Activated naive CD4-positive, alpha-beta T cell treated with anti-CD3 and anti-CD28 coated beads for 36 hours (primary cell): ENCODE measurements at regions of chr10 and their contacts with region 1.

Region 1: GRCh38 chr10:62224606-62225005 is 44.0 kb downstream of the RTKN2 start:
- DNase-seq: no peak
- H3K4me3 Mint-ChIP-seq: no peak overlapping the region
- H3K27ac Mint-ChIP-seq: peak overlapping the region; percentile 86
- H3K4me1 Mint-ChIP-seq: peaks cover 10% of the 10 kb centered on the region
- H3K27me3 Mint-ChIP-seq: no peaks in the 10 kb centered on the region

Region 2: GRCh38 chr10:62106929-62107532 is 117.6 kb before region 1 on chr10:
- CTCF ChIA-PET with region 1: no interaction called
- intact Hi-C with region 1: no loop called
- DNase-seq: no peak
- H3K4me3 Mint-ChIP-seq: no peak overlapping the region
- H3K27ac Mint-ChIP-seq: no peak overlapping the region
- H3K4me1 Mint-ChIP-seq: peaks cover 35% of the 10 kb centered on the region
- H3K27me3 Mint-ChIP-seq: no peaks in the 10 kb centered on the region

Region 3: DNA sequence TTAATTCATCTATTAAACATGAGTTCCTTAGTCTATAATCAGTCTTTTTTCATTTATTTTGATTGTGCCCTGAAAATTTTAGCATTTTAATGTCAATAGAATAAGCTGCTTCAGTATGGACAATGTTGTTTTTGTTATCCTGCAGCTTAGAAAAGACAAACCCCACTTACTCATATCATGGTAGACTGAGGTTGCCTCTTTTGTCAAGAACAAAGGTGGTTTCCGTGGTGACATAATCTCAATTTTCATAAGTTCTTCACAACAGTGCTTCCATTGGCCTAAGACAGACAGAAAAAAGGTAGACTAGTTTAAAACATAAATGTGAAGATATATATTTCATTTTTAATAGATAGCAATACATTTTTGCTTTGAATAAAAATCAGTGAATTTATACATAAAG is 25.0 kb before region 1 on chr10:
- CTCF ChIA-PET with region 1: no interaction called
- intact Hi-C with region 1: loop called (anchors 1 kb)
- DNase-seq: no peak
- H3K4me3 Mint-ChIP-seq: no peak overlapping the region
- H3K27ac Mint-ChIP-seq: peak overlapping the region; percentile 5
- H3K4me1 Mint-ChIP-seq: peaks cover 31% of the 10 kb centered on the region
- H3K27me3 Mint-ChIP-seq: no peaks in the 10 kb centered on the region

Region 4: GRCh38 chr10:62335326-62335725 is 110.7 kb after region 1 on chr10:
- CTCF ChIA-PET with region 1: no interaction called
- intact Hi-C with region 1: no loop called
- DNase-seq: no peak
- H3K4me3 Mint-ChIP-seq: no peak overlapping the region
- H3K27ac Mint-ChIP-seq: no peak overlapping the region
- H3K4me1 Mint-ChIP-seq: no peaks in the 10 kb centered on the region
- H3K27me3 Mint-ChIP-seq: peaks cover 7% of the 10 kb centered on the region